Panc1 (cell line): ENCODE measurements at regions of chr12 and their contacts with region 1.

Region 1: GRCh38 chr12:84874125-84874824 is 38.3 kb downstream of the SLC6A15 start:
- DNase-seq: peak; percentile 10
- ATAC-seq: peak; percentile 90
- H3K4me3 ChIP-seq: no peak overlapping the region
- H3K27ac ChIP-seq: no peak overlapping the region
- H3K4me1 ChIP-seq: no peaks in the 10 kb centered on the region
- H3K27me3 ChIP-seq: no peaks in the 10 kb centered on the region
- CTCF ChIP-seq: peak; percentile 70; the same call in 1 of the 2 replicates

Region 2: DNA sequence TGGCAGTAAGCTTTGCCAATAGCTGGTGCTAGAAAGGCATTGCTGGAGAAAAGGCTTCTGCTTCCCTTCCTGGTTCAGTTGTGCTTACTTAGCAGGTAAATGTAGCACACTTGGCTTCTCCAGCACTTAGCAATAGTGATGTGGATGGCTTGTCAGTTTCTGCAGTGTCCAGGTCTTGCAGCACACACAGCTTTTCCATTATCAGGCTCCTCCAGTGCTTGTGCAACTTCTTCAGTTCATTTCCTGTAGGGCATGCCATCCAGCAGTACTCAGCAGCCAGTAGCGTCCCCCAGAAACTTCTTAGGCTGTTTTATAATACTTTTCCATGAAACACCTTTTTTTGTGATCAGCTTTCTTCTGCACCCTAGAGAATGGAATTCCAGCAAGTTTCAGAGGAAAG is 116.3 kb before region 1 on chr12:
- CTCF ChIA-PET with region 1: no interaction called
- POLR2A ChIA-PET with region 1: no interaction called
- in situ Hi-C with region 1: no loop called
- intact Hi-C with region 1: no loop called
- DNase-seq: no peak
- ATAC-seq: no peak
- H3K4me3 ChIP-seq: no peak overlapping the region
- H3K27ac ChIP-seq: no peak overlapping the region
- H3K4me1 ChIP-seq: no peaks in the 10 kb centered on the region
- H3K27me3 ChIP-seq: no peaks in the 10 kb centered on the region
- CTCF ChIP-seq: no peak

Region 3: GRCh38 chr12:85029456-85029855 is 155.2 kb after region 1 on chr12:
- CTCF ChIA-PET with region 1: no interaction called
- POLR2A ChIA-PET with region 1: no interaction called
- in situ Hi-C with region 1: no loop called
- intact Hi-C with region 1: loop called (anchors 1 kb)
- DNase-seq: no peak
- ATAC-seq: no peak
- H3K4me3 ChIP-seq: no peak overlapping the region
- H3K27ac ChIP-seq: no peak overlapping the region
- H3K4me1 ChIP-seq: no peaks in the 10 kb centered on the region
- H3K27me3 ChIP-seq: no peaks in the 10 kb centered on the region
- CTCF ChIP-seq: peak; percentile 36; the same call in 1 of the 2 replicates

Region 4: GRCh38 chr12:85057370-85057963 is 183.2 kb after region 1 on chr12:
- CTCF ChIA-PET with region 1: no interaction called
- POLR2A ChIA-PET with region 1: no interaction called
- in situ Hi-C with region 1: no loop called
- intact Hi-C with region 1: loop called (anchors 1 kb)
- DNase-seq: peak; percentile 18
- ATAC-seq: no peak
- H3K4me3 ChIP-seq: no peak overlapping the region
- H3K27ac ChIP-seq: no peak overlapping the region
- H3K4me1 ChIP-seq: no peaks in the 10 kb centered on the region
- H3K27me3 ChIP-seq: no peaks in the 10 kb centered on the region
- CTCF ChIP-seq: peak; percentile 79; the same call in 1 of the 2 replicates